ENCODE measurements at regions of chr1 and their contacts with region 1.

Region 1: DNA sequence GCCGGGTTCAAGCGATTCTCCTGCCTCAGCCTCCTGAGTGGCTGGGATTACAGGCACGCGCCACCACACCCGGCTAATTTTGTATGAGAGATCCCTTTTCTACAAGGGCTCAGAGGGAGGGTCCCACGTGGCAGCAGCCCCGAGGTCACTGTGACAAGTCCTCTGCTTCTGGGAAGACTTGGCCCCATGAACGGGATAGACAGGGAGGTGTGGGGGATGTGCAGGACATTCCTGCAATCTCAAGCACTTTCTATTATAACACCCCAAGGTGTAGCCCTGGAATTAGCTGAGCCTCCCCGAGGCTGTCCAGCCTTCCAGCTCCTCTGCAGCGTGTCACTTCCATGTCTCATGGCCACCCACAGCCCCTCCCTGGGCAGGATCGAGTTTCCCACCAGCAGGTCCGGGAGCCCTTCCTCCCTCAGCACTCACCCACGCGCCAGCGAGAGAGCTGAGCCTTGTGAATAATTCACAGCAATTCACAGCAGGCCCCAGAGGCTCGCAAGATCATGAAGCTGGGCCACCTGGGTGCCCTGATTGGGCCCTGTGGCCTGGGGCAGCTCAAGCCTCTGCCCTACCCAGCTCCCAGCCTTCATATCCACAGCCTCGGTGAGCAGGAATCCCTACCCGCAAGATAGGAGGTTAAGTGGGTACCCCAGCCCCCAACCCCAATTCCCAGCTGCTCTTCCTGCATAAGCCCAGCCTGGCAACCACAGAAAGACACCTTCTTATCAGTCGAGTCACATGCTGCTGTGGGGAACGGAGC is 22.8 kb upstream of the RNU1-4 start:
- DNase-seq: peak; percentile 14
- ATAC-seq: no peak
- H3K4me3 Mint-ChIP-seq: no peak overlapping the region
- H3K27ac Mint-ChIP-seq: no peak overlapping the region
- H3K4me1 Mint-ChIP-seq: no peaks in the 10 kb centered on the region
- H3K27me3 Mint-ChIP-seq: peaks cover 13% of the 10 kb centered on the region

Region 2: GRCh38 chr1:16631248-16632043 is 86.1 kb before region 1 on chr1:
- CTCF ChIA-PET with region 1: interaction called, 3 read pairs
- POLR2A ChIA-PET with region 1: no interaction called
- intact Hi-C with region 1: loop called in 1 of 2 experiments (anchors 10 kb)
- DNase-seq: peak; percentile 11
- ATAC-seq: no peak
- H3K4me3 Mint-ChIP-seq: no peak overlapping the region
- H3K27ac Mint-ChIP-seq: no peak overlapping the region
- H3K4me1 Mint-ChIP-seq: no peaks in the 10 kb centered on the region
- H3K27me3 Mint-ChIP-seq: no peaks in the 10 kb centered on the region

Measured in activated CD4-positive, alpha-beta T cell treated with anti-CD3 and anti-CD28 coated beads for 36 hours (primary cell).